Activated CD4-positive, alpha-beta memory T cell treated with anti-CD3 and anti-CD28 coated beads for 36 hours (primary cell): ENCODE measurements at regions of chr1 and their contacts with region 1.

Region 1: DNA sequence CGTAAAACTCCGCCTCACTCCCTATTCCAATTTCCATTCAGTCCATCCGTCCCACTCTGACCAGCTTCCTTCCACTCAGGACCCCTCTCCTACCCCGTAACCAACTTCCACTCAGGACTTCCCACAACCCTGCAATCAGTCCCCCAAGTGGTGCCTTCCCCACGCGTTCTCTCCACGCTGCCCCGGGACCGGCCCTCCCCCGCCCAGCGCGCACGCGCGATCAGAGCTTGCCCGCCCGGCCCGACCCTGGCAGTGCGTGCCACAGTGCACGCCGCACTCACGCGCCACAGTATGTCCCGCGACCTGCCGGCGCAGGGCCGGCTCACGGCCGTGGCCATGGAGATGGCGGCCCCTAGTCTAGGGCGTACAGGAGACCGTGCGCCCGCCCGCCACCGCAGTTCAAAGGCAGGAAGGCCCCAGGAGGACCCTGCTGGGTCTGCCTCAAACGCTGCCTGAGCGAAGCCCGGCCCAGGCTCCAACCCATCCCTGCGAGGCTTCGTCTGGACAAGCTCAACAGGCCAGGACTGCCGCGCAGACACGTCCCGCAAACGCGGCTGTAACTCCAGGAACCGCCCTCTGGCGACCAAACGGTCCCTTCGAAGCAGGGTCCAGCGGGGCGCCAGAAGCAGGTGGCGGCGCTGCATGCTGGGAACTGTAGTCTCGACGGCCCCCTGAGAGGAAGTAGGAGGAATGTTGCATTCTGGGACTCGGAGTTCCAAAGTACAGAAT is at the start of gene NDC1:
- DNase-seq: peak; percentile 91
- H3K4me3 Mint-ChIP-seq: peak within 1 kb of the TSS; percentile 90
- H3K27ac Mint-ChIP-seq: peak within 1 kb of the TSS; percentile 96
- H3K4me1 Mint-ChIP-seq: peaks cover 23% of the 10 kb centered on the region
- H3K27me3 Mint-ChIP-seq: peaks cover 2% of the 10 kb centered on the region
- total RNA-seq, gene NDC1: 29.6 to 32.0 TPM

Region 2: DNA sequence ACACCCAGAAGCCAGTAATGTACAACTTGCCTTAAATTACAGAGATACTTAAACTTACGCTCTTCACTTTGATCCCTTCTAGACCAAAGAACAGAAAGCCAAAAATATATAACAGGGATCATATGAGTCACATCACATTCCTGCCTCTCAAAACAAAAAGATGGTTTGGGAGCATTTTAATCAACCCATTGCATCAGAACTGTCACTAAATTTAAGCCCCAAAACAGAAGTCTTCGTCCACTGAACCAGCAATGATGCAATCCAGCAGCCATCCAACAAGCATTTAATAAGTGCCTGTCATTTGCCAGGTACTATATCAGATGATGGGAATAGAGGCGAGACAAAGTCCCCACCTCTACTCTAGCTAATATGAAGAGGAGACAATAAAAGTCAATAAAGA is 56.4 kb before region 1 on chr1:
- CTCF ChIA-PET with region 1: no interaction called
- POLR2A ChIA-PET with region 1: no interaction called
- intact Hi-C with region 1: loop called (anchors 5 kb)
- DNase-seq: no peak
- H3K4me3 Mint-ChIP-seq: no peak overlapping the region
- H3K27ac Mint-ChIP-seq: no peak overlapping the region
- H3K4me1 Mint-ChIP-seq: peaks cover 14% of the 10 kb centered on the region
- H3K27me3 Mint-ChIP-seq: no peaks in the 10 kb centered on the region